ENCODE measurements at regions of chr12 and their contacts with region 1.

Region 1: DNA sequence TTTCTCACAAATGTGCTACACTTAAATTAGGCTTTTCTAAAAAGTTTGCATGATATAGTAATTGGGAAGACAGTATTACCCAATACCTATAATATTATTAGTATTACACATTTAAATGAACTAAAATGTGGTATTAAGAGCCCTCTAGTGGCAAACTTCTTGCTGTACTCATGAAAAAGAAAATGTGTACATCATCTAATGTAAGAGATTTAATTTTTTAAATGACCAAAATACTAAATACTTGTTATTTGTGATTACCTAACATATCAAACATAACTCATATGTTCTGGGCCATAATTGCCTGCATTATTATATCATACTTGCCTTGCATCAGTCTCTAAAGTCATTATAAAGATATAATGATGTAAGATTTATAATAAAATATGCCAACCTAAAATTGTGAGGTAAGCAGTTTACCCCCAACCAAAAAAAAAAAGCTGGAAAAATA is 64.2 kb downstream of the DNAI7 start:
- DNase-seq: no peak
- H3K4me3 ChIP-seq: no peak overlapping the region
- H3K27ac ChIP-seq: no peak overlapping the region
- H3K4me1 ChIP-seq: no peaks in the 10 kb centered on the region
- H3K27me3 ChIP-seq: no peaks in the 10 kb centered on the region
- CTCF ChIP-seq: peak; percentile 24 to 74 (median 60)
- POLR2A ChIP-seq: no peak

Region 2: GRCh38 chr12:24991209-24992049 is 139.3 kb before region 1 on chr12:
- intact Hi-C with region 1: loop called (anchors 2 kb)
- DNase-seq: no peak
- H3K4me3 ChIP-seq: no peak overlapping the region
- H3K27ac ChIP-seq: no peak overlapping the region
- H3K4me1 ChIP-seq: peaks cover 0 to 28% (median 11%) of the 10 kb centered on the region in 6 donors
- H3K27me3 ChIP-seq: no peaks in the 10 kb centered on the region
- CTCF ChIP-seq: peak; percentile 29 to 82 (median 65)
- POLR2A ChIP-seq: no peak